ENCODE measurements at regions of chr22 and their contacts with region 1.

Region 1: GRCh38 chr22:30104501-30105156 is 24.4 kb downstream of the HORMAD2 start:
- DNase-seq: no peak
- H3K4me3 ChIP-seq: no peak overlapping the region
- H3K27ac ChIP-seq: no peak overlapping the region
- H3K4me1 ChIP-seq: peaks cover 0 to 20% (median 0%) of the 10 kb centered on the region in 6 donors
- H3K27me3 ChIP-seq: no peaks in the 10 kb centered on the region
- CTCF ChIP-seq: no peak
- POLR2A ChIP-seq: no peak

Region 2: GRCh38 chr22:30289134-30289979 is 184.7 kb after region 1 on chr22 and contains the start of gene CASTOR1:
- intact Hi-C with region 1: loop called (anchors 10 kb)
- DNase-seq: peak; percentile 98
- H3K4me3 ChIP-seq: peak within 1 kb of the TSS; percentile 70 to 91 (median 86)
- H3K27ac ChIP-seq: peak within 1 kb of the TSS; percentile 83 to 95 (median 90)
- H3K4me1 ChIP-seq: peaks cover 29 to 69% (median 60%) of the 10 kb centered on the region in 6 donors
- H3K27me3 ChIP-seq: no peaks in the 10 kb centered on the region
- CTCF ChIP-seq: peak in 4 of 11 experiments; percentile 10 to 40 (median 24)
- POLR2A ChIP-seq: peak in 1 of 3 donors; percentile 16
- total RNA-seq, gene CASTOR1: 7.4 to 18.9 (median 14.6) TPM

Measured in spleen (tissue), 13 donors.